Left ventricle myocardium superior (tissue), 1 donor: ENCODE measurements at regions of chr3 and their contacts with region 1.

Region 1: DNA sequence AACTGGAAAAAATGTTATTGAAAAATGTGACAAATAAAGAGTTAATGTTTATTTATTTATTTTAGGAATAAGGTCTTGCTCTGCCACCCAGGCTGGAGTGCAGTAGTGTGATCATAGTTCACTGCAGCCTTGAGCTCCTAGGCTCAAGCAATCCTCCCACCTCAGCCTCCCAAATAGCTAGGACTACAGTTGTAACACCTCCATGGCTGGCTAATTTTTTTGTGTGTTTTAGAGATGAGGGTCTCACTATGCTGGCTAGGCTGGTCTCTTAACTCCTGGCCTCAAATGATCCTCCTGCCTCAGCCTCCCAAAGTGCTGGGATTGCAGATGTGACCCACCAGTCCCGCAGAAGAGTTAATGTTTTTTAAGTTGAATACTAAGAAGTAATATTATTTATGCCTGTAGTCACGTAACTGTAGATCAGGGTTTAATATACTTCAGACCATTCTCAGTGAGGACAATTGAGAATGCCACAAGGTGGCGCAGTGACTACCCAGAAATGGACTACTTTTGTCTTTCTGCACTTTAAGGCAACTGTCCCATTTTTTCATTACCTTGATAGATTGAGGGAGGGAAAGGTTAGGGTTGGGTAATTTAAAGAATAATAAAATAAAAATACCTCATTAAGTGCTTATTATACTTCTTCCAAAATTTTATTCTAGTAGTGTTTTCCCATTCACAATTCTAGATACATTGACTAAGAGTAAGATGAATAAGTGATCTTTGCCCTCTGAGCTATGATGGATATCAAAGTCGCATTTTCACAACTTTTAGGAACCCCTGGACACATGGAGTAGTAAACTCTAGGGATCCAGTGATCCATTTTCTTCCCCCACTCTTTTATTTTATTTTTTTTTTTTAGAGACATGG is 6.0 kb downstream of the MUC13 start:
- DNase-seq: peak; percentile 52
- ATAC-seq: peak; percentile 69

Region 2: DNA sequence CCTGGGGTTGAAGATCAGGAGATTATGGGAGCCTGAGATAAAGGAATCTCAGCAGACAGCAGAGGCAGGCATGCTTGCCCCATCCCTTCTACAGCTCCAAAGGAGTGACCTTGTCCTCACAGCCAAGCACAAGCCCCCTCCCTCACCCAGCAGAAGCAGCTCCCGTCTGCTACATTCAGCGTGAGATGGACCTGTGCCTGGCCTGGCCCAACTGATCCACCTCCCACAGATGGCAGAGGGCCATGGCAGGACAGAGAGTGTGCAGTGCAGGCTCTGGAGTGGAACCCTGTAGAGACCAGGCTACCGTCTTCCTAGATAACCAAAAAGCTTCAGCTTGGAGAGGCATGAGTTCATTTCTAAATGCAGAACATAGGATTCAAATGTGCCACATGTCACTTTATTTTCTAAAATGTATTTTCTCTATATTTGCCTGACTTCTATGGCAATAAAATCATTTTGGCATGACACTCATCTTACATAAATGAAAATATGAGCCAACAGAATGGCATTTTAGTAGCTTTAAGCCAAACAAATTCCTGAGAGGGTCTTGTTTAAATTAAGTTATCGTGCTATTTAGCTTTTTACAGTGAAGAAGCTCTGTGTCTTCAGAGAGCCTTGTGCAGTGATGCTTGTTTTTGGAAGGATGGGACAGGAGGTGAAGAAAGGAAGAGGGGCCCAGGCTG is 240.3 kb after region 1 on chr3:
- intact Hi-C with region 1: loop called (anchors 2 kb)
- DNase-seq: peak; percentile 53
- ATAC-seq: peak; percentile 78

Region 3: GRCh38 chr3:125585595-125586223 is 657.1 kb after region 1 on chr3:
- intact Hi-C with region 1: loop called (anchors 10 kb)
- DNase-seq: no peak
- ATAC-seq: peak; percentile 74